ENCODE measurements at regions of chr4 and their contacts with region 1.

Region 1: DNA sequence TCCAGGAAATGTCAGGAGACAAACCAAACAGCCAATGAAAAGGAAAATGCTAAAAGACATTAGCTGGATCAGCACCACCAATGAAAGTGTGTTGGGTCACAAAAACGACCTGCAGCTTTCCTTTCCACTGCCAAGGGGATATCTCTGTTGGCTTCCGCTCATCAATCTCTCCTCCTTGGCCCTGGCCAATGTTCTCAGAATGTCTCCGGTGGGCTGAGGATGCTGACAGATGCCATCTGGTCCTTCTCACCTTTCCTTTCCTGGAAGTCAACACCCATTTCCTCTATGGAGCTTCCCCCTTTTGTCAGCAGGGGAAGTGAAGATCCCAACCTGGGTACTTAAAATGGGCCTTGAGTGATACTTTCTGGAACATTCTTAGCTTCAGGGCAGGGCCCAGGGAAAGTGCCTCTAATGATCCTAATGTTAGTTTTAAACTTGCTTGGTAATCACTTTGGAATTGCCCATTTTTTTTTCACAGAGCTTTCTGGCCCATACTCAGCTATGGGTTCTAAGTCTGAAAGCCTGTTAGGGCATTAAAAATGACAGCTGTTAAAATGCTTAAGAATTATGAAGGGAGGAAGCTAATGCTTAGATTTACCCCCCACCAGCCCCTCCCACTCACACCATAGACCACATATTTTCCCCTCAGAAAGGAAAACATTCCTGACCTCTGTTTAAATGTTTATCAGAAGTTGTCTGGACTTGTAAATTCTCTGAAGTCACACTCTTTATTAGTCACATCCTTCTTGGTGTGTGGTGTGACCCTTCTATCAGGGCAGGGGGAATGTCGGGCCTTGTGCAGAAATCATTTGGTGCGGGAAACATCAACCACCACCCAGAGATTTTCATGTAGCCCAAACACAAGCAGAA is 29.2 kb downstream of the IGFBP7 start:
- DNase-seq: peak; percentile 91
- H3K4me3 ChIP-seq: no peak overlapping the region
- H3K27ac ChIP-seq: peak overlapping the region; percentile 91
- H3K27me3 ChIP-seq: no peaks in the 10 kb centered on the region
- CTCF ChIP-seq: no peak

Region 2: GRCh38 chr4:57064811-57065711 is 16.0 kb before region 1 on chr4:
- CTCF ChIA-PET with region 1: interaction called, 9 read pairs
- POLR2A ChIA-PET with region 1: interaction called, 49 read pairs
- DNase-seq: peak; percentile 84
- H3K4me3 ChIP-seq: peak overlapping the region; percentile 31
- H3K27ac ChIP-seq: peak overlapping the region; percentile 88
- H3K27me3 ChIP-seq: no peaks in the 10 kb centered on the region
- CTCF ChIP-seq: no peak

Region 3: DNA sequence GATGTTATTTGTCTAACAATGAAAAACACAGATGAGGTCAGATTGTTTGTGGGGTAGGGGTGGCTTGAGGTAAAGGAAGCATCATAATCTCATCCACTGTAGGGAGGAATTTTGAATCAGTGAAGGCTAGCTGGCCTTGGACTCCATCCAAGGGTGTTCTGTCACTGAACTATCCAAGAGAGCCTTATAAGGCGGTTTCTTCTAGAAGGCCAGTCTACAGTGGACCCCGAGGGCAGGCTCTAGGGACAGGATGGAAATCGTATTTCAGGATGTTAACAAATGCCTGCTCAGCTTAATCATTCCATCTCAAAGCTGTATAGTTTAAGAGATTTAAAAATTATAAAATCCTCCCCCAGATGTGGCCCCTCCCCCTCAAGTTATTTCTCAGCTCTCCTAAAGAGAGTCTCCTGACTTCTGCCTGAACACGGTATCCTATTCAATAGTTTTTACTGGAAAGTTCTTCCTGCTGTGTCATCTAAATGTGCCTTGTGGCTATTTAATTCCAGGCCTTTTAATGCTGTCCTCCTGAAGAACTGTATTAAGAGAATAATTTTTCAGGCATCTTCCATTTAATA is 21.1 kb after region 1 on chr4:
- CTCF ChIA-PET with region 1: no interaction called
- POLR2A ChIA-PET with region 1: interaction called, 20 read pairs
- DNase-seq: peak; percentile 68
- H3K4me3 ChIP-seq: no peak overlapping the region
- H3K27ac ChIP-seq: peak overlapping the region; percentile 69
- H3K27me3 ChIP-seq: no peaks in the 10 kb centered on the region
- CTCF ChIP-seq: no peak

Region 4: DNA sequence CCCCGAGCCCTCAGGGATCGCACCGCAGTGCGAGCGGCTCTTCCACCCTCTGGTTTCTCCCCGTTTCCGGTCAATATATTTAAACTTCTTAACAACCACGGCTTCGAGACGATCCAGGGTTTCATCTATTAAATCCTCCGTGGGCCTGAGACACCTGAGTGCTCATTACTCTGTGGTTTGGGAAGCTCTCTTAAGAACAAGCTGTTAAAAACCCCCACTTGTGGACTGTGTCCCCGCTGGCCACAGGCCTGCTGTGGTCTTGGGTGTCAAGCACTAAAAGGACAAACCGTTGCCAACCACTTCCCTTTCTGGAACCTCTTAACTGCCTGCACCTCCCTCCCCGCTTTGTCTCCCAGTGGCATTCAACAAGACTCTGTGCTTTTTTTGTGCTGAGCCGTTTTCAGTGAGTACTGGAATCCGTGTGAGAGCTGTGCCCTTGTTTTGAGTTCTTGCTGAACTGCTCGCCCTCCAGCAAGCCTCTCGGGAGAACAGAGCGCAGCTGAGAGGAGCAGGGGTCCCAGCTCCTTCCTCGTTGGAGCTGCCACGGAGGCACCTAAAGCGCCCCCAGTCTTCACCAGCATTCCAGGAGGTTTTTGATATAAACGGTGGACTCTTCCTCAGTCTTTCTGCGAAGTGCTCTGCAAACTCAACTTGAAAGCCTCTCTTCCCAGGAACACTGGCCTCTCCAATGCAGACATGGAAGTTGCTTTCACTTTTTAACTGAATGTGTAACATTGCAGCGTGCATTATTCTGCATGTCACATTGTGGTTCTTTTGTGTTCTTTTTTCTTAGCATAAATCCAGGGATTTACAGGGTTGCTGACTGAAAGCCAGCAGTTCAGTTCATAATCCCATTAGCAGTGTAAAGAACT is 29.9 kb after region 1 on chr4:
- CTCF ChIA-PET with region 1: interaction called, 4 read pairs
- POLR2A ChIA-PET with region 1: interaction called, 24 read pairs
- DNase-seq: no peak
- H3K4me3 ChIP-seq: peak overlapping the region; percentile 75
- H3K27ac ChIP-seq: peak overlapping the region; percentile 94
- H3K27me3 ChIP-seq: no peaks in the 10 kb centered on the region
- CTCF ChIP-seq: no peak